Heart left ventricle (tissue), 16 donors: ENCODE measurements at regions of chr3 and their contacts with region 1.

Region 1: DNA sequence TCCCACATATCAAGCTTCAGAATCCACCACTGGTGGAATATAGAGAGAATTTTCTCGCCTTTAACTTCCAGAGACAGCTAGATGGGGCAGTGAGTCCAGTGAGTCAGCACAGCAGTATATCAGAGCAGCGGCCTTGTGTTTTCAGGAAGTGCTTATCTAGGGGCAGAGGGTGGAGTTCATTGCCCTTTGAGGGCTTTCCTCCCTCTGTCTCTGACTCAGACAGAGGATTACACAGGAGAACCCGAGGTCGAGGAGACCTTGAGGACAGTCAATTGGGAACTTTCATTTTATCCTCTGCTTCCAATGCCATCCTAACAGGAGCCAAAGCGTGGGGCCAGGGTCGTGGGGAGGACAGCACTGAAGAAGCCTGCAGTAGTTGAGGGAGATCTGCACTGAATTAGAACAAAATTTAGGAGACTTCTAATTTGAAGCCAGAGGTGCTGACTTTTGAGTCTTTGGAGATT is 109.6 kb upstream of the UMPS start:
- DNase-seq: peak in 4 of 5 donors; percentile 32 to 67 (median 38)
- ATAC-seq: peak; percentile 24 to 85 (median 75)
- H3K4me3 ChIP-seq: no peak overlapping the region
- H3K27ac ChIP-seq: peak overlapping the region in 10 of 12 donors; percentile 12 to 89 (median 60)
- H3K4me1 ChIP-seq: peaks cover 0 to 48% (median 20%) of the 10 kb centered on the region in 12 donors
- H3K27me3 ChIP-seq: no peaks in the 10 kb centered on the region
- CTCF ChIP-seq: peak in 2 of 12 donors; percentile 15 to 28
- POLR2A ChIP-seq: no peak

Region 2: GRCh38 chr3:124576565-124577493 is 43.8 kb before region 1 on chr3:
- intact Hi-C with region 1: loop called in 1 of 10 experiments (anchors 1 kb)
- DNase-seq: no peak
- ATAC-seq: peak; percentile 70 to 81 (median 74)
- H3K4me3 ChIP-seq: no peak overlapping the region
- H3K27ac ChIP-seq: peak overlapping the region in 3 of 12 donors; percentile 18 to 24 (median 21)
- H3K4me1 ChIP-seq: peaks cover 0 to 16% (median 5%) of the 10 kb centered on the region in 12 donors
- H3K27me3 ChIP-seq: no peaks in the 10 kb centered on the region
- CTCF ChIP-seq: peak in 8 of 12 donors; percentile 7 to 40 (median 24)
- POLR2A ChIP-seq: no peak